Gastrocnemius medialis (tissue), 4 donors: ENCODE measurements at regions of chr18 and their contacts with region 1.

Region 1: DNA sequence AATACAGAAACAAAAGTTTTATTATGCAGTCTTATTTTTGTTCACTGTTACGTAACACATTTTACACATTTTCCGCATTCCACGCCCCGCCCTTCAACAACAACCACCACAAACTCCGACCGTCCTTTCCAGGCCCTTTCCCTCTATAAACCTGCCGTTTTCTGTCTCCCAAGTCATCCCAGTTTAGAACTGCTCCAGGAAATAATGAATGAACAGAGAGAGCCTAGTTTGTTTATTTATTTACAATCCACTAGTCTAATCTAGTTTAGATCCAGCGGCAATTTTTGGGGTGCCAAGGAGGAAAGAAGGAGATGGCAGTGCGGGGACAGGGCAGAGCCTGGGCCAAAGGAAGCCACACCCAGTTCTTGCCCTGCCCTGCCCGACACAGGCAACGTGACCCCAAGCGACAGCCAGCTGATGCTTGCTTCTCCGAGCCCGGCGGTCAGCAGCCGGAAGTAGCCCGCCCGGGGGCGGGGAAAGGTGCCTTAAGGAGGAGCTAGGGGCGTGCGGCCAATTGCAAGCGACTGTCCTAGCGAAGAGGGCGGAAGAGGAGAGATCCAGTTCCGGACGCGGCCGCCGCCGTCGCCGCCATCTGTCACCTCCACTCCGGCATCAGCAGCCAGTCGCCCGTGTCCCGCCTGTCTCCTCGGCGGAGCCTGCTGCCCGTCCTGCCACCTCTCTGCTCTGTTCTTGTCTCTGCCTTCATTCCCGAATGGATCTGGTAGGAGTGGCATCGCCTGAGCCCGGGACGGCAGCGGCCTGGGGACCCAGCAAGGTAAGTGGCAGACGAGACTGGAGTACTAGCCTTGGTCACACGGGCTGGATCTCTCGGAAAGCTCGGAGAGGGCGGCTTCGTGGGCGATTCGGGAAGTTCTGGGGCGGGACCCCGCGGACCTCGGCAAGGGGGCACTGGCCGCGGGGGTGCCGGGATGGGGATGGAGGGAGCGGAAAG is at the start of gene RIOK3:
- DNase-seq: peak; percentile 99
- ATAC-seq: peak; percentile 96 to 97
- H3K4me3 ChIP-seq: peak within 1 kb of the TSS; percentile 84 to 97 (median 89)
- H3K27ac ChIP-seq: peak within 1 kb of the TSS; percentile 94 to 96 (median 94)
- H3K4me1 ChIP-seq: peaks cover 19 to 35% of the 10 kb centered on the region in 2 donors
- H3K27me3 ChIP-seq: no peaks in the 10 kb centered on the region
- CTCF ChIP-seq: peak in 2 of 5 experiments; percentile 8 to 10
- POLR2A ChIP-seq: peak; percentile 93 to 96
- total RNA-seq, gene RIOK3: 77.3 to 220 (median 114) TPM

Region 2: DNA sequence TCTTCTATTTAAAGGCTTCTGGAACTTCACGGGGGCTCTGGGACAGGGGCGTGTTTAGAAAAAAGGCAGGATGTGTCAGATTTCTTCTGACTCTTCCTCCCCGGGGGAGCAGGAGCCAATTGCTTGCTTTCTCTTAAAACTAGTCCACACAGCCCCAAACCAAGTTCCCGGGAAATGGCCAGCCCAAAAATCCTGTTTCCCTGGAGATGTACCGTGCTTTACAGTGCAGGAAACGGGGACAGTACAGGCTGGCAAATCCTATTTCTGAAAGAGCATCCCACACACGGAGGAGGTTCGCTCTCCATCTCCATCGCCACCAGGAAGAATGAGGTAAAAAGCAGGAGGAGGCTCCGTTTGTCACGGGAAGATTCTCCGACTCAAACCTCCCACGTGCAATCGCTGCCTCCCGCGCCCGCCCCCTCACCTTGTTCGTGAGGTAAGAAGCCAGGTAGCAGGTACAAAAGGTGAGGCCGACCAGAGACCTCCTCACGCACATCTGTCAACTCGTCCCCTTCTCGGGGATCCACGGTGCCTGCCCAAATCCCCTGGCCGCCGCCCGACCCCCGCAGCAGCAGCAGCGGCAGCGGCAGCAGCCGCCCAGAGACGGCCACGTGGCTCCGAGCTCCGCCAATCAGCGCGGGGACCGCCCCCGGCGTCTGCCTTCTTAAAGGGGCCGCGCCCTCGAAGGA is 15.5 kb before region 1 on chr18:
- in situ Hi-C with region 1: no loop called
- intact Hi-C with region 1: loop called (anchors 2 kb)
- DNase-seq: peak; percentile 44 to 68
- ATAC-seq: peak; percentile 90 to 95
- H3K4me3 ChIP-seq: peak overlapping the region; percentile 86 to 97 (median 93)
- H3K27ac ChIP-seq: peak overlapping the region; percentile 47 to 71 (median 62)
- H3K4me1 ChIP-seq: peaks cover 8 to 15% of the 10 kb centered on the region in 2 donors
- H3K27me3 ChIP-seq: no peaks in the 10 kb centered on the region
- CTCF ChIP-seq: no peak
- POLR2A ChIP-seq: peak in 1 of 2 donors; percentile 10

Region 3: GRCh38 chr18:23515911-23516546 is 63.0 kb after region 1 on chr18:
- in situ Hi-C with region 1: no loop called
- intact Hi-C with region 1: no loop called
- DNase-seq: peak; percentile 22 to 54
- ATAC-seq: peak; percentile 86 to 93
- H3K4me3 ChIP-seq: no peak overlapping the region
- H3K27ac ChIP-seq: no peak overlapping the region
- H3K4me1 ChIP-seq: no peaks in the 10 kb centered on the region
- H3K27me3 ChIP-seq: no peaks in the 10 kb centered on the region
- CTCF ChIP-seq: peak; percentile 56 to 88 (median 75)
- POLR2A ChIP-seq: no peak

Region 4: DNA sequence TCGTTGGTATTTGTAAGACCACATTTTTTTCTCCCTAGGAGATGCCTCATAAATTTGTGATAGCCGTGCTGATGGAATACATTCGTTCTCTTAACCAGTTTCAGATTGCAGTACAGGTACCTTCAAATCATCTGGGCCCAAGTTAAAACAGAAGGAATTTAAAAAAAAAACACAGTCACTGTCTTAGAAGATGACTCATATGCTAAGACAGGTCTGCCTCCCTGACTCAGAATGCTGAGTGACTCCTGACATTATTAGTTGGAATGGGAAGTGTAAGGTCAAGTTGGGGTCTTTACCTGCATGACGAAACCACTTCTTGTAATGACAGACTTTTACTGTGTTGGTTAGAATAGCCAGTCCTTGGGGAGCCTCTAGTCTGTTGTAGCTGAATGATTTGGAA is 76.6 kb after region 1 on chr18:
- in situ Hi-C with region 1: no loop called
- intact Hi-C with region 1: no loop called
- DNase-seq: no peak
- ATAC-seq: no peak
- H3K4me3 ChIP-seq: no peak overlapping the region
- H3K27ac ChIP-seq: peak overlapping the region in 1 of 4 donors; percentile 53
- H3K4me1 ChIP-seq: peaks cover 0 to 7% of the 10 kb centered on the region in 2 donors
- H3K27me3 ChIP-seq: no peaks in the 10 kb centered on the region
- CTCF ChIP-seq: no peak
- POLR2A ChIP-seq: no peak

Region 5: GRCh38 chr18:23586249-23587196 is 133.5 kb after region 1 on chr18 and contains the start of gene NPC1:
- in situ Hi-C with region 1: no loop called
- intact Hi-C with region 1: loop called (anchors 1 kb)
- DNase-seq: peak; percentile 87 to 89
- ATAC-seq: peak; percentile 91 to 93
- H3K4me3 ChIP-seq: peak within 1 kb of the TSS; percentile 77 to 97 (median 90)
- H3K27ac ChIP-seq: peak within 1 kb of the TSS; percentile 95 to 99 (median 97)
- H3K4me1 ChIP-seq: peaks cover 20 to 22% of the 10 kb centered on the region in 2 donors
- H3K27me3 ChIP-seq: no peaks in the 10 kb centered on the region
- CTCF ChIP-seq: peak; percentile 68 to 97 (median 90)
- POLR2A ChIP-seq: peak; percentile 94
- total RNA-seq, gene NPC1: 35.7 to 99.4 (median 46.2) TPM